HCT116 (cell line): ENCODE measurements at regions of chr3 and their contacts with region 1.

Region 1: GRCh38 chr3:187679638-187680396 is 9.6 kb upstream of the SST start:
- DNase-seq: peak; percentile 64
- ATAC-seq: peak; percentile 94
- H3K4me3 ChIP-seq: no peak overlapping the region
- H3K27ac ChIP-seq: no peak overlapping the region
- H3K4me1 ChIP-seq: no peaks in the 10 kb centered on the region
- H3K27me3 ChIP-seq: peaks cover 11% of the 10 kb centered on the region
- CTCF ChIP-seq: peak; percentile 85 to 92 (median 90)
- POLR2A ChIP-seq: no peak
- RAD21 ChIP-seq: peak; percentile 92

Region 2: DNA sequence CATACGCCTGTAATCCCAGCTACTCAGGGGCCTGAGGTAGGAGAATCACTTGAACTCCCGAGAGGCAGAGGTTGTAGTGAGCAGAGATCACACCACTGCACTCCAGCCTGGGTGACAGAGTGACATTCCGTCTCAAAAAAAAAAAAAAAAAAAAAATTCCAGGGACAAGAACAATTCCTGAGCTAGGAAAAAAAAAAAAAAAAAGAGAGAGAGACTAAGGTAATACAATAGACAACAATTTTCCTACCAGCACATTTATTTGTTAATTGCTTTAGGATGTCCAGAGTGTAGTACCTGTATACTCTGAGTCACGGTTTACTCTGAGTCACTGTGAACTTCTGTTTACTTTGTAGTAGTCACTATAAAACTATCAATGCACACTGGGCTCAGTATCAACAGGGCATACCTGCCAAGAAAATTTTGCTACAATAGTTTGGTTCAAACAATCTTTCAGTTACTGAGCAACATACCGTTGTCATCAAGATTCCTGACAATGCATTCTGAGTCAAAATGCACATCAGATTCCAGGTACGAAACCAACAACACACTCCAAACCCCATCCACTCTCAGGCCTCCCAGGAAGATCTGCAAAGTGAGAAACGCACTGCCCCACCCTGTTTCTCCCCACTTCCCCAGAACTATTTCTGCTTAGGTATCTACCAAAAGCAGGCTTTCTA is 1883.2 kb before region 1 on chr3:
- CTCF ChIA-PET with region 1: no interaction called
- POLR2A ChIA-PET with region 1: no interaction called
- RAD21 ChIA-PET with region 1: no interaction called
- intact Hi-C with region 1: no loop called
- DNase-seq: peak; percentile 97
- ATAC-seq: peak; percentile 88
- H3K4me3 ChIP-seq: peak overlapping the region in 1 of 2 experiments; percentile 24; a peak in 3 of 4 replicates
- H3K27ac ChIP-seq: peak overlapping the region; percentile 84
- H3K4me1 ChIP-seq: peaks cover 73 to 92% of the 10 kb centered on the region in 2 experiments
- H3K27me3 ChIP-seq: no peaks in the 10 kb centered on the region
- CTCF ChIP-seq: no peak
- POLR2A ChIP-seq: no peak
- RAD21 ChIP-seq: no peak

Region 3: GRCh38 chr3:187223799-187224198 is 456.0 kb before region 1 on chr3:
- CTCF ChIA-PET with region 1: interaction called, 68 read pairs
- POLR2A ChIA-PET with region 1: no interaction called
- RAD21 ChIA-PET with region 1: interaction called, 10 to 17 read pairs
- intact Hi-C with region 1: loop called (anchors 1 kb)
- DNase-seq: no peak
- ATAC-seq: no peak
- H3K4me3 ChIP-seq: no peak overlapping the region
- H3K27ac ChIP-seq: no peak overlapping the region
- H3K4me1 ChIP-seq: peaks cover 0 to 6% of the 10 kb centered on the region in 2 experiments; a peak in 2 of 4 replicates
- H3K27me3 ChIP-seq: no peaks in the 10 kb centered on the region; the same call in 1 of the 2 replicates
- CTCF ChIP-seq: no peak
- POLR2A ChIP-seq: no peak
- RAD21 ChIP-seq: no peak

Region 4: DNA sequence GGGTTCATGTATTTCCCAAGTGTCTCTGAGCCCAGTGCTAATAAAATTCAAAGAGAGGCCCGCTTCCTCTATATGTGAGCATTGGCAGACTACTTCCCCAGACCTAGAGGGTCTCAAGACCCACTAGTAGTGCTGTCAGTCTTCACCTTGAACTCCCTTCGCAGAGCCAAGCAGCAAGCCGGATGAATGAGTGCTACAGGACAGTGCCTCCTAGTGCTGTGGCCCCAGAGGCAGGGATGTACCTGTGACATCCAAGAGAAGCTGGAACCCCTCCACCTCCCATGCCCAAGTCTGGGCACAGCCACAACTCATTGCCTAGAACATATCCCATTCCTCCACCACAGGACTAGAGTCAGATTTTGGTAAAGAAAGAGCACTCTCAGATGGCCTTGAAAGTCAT is 351.1 kb before region 1 on chr3:
- CTCF ChIA-PET with region 1: interaction called, 11 read pairs
- POLR2A ChIA-PET with region 1: no interaction called
- RAD21 ChIA-PET with region 1: no interaction called
- intact Hi-C with region 1: no loop called
- DNase-seq: no peak
- ATAC-seq: no peak
- H3K4me3 ChIP-seq: no peak overlapping the region
- H3K27ac ChIP-seq: no peak overlapping the region
- H3K4me1 ChIP-seq: no peaks in the 10 kb centered on the region
- H3K27me3 ChIP-seq: peaks cover 47% of the 10 kb centered on the region
- CTCF ChIP-seq: no peak
- POLR2A ChIP-seq: no peak
- RAD21 ChIP-seq: no peak

Region 5: DNA sequence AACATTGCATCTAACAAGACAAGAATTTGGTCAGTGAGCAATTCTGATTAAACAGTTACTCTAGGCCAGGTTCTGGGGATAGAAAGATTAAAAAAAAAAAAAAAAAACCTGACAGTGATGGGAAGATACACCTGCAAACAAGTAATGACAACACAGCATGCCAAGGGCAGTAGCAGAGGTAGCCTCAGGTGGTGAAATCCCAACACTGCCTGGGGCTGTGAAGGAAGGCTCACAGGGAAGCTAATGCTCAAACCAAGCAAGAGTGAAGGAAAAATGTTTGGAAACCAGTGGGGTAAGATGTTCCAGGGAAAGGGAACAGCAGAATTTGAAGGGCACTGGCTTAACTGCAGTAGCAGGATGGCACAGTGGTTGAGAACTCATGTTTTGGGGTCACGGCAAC is 13.6 kb after region 1 on chr3:
- CTCF ChIA-PET with region 1: interaction called, 11 read pairs
- POLR2A ChIA-PET with region 1: no interaction called
- RAD21 ChIA-PET with region 1: no interaction called
- intact Hi-C with region 1: no loop called
- DNase-seq: no peak
- ATAC-seq: no peak
- H3K4me3 ChIP-seq: no peak overlapping the region
- H3K27ac ChIP-seq: no peak overlapping the region
- H3K4me1 ChIP-seq: no peaks in the 10 kb centered on the region
- H3K27me3 ChIP-seq: peaks cover 13% of the 10 kb centered on the region; the same call in 1 of the 2 replicates
- CTCF ChIP-seq: no peak
- POLR2A ChIP-seq: no peak
- RAD21 ChIP-seq: no peak

Region 6: GRCh38 chr3:187714404-187714979 is 34.7 kb after region 1 on chr3:
- CTCF ChIA-PET with region 1: interaction called, 26 read pairs
- POLR2A ChIA-PET with region 1: no interaction called
- RAD21 ChIA-PET with region 1: interaction called, 4 read pairs
- intact Hi-C with region 1: loop called (anchors 1 kb)
- DNase-seq: peak; percentile 72
- ATAC-seq: peak; percentile 96
- H3K4me3 ChIP-seq: no peak overlapping the region
- H3K27ac ChIP-seq: no peak overlapping the region
- H3K4me1 ChIP-seq: peaks cover 3% of the 10 kb centered on the region in 2 experiments; a peak in 2 of 4 replicates
- H3K27me3 ChIP-seq: no peaks in the 10 kb centered on the region
- CTCF ChIP-seq: peak; percentile 85 to 95 (median 93)
- POLR2A ChIP-seq: no peak
- RAD21 ChIP-seq: peak; percentile 97

Region 7: DNA sequence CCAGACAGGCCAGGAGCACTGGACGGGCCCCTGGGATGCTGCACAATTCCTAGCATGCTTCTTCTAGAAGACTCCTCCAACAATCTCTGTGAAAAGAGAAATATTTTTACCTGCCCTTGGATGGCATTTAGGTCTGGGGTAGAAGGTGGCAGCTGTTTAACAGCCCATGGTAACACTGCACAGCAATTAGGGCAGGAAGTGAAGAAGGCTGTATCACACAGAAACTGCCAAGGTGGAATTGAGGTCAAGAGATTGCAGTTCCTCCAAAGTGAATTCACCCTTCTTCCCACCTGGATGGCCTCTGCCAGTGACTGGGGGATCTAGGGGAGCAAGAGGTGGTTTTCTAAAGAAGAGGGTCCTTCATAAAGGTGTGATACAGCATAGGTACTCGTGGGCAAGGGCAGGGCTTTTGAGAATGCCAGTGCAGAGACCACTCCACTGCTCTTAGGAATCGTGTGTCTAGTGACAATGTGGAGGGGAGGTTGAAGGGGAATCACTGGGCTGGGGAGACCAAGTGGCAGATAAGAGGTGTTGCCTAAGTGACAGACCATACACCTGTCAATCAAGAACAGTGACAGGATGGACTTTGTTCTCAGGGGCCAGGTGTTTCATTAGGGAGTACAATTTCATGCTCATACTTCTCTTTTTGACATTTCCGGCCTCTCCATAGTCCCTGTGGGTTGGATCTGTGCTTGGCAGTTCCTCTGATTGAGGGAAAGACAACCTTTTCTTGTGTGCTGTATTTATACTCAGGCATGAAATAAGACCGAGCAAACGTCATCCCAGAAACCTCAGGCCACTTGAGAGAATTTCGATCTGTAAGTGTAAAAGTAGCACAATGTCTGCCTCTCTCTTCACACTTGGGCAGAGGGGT is 149.0 kb after region 1 on chr3:
- CTCF ChIA-PET with region 1: no interaction called
- POLR2A ChIA-PET with region 1: no interaction called
- RAD21 ChIA-PET with region 1: no interaction called
- intact Hi-C with region 1: no loop called
- DNase-seq: no peak
- ATAC-seq: no peak
- H3K4me3 ChIP-seq: no peak overlapping the region
- H3K27ac ChIP-seq: no peak overlapping the region
- H3K4me1 ChIP-seq: no peaks in the 10 kb centered on the region
- H3K27me3 ChIP-seq: no peaks in the 10 kb centered on the region
- CTCF ChIP-seq: no peak
- POLR2A ChIP-seq: no peak
- RAD21 ChIP-seq: no peak